Right ventricle myocardium superior (tissue), 1 donor: ENCODE measurements at regions of chr12 and their contacts with region 1.

Region 1: GRCh38 chr12:5988659-5989116 is 43.6 kb upstream of the ANO2 start:
- DNase-seq: peak; percentile 90
- ATAC-seq: peak; percentile 95

Region 2: GRCh38 chr12:6039894-6040568 is 51.3 kb after region 1 on chr12:
- intact Hi-C with region 1: loop called (anchors 2 kb)
- DNase-seq: no peak
- ATAC-seq: peak; percentile 84

Region 3: DNA sequence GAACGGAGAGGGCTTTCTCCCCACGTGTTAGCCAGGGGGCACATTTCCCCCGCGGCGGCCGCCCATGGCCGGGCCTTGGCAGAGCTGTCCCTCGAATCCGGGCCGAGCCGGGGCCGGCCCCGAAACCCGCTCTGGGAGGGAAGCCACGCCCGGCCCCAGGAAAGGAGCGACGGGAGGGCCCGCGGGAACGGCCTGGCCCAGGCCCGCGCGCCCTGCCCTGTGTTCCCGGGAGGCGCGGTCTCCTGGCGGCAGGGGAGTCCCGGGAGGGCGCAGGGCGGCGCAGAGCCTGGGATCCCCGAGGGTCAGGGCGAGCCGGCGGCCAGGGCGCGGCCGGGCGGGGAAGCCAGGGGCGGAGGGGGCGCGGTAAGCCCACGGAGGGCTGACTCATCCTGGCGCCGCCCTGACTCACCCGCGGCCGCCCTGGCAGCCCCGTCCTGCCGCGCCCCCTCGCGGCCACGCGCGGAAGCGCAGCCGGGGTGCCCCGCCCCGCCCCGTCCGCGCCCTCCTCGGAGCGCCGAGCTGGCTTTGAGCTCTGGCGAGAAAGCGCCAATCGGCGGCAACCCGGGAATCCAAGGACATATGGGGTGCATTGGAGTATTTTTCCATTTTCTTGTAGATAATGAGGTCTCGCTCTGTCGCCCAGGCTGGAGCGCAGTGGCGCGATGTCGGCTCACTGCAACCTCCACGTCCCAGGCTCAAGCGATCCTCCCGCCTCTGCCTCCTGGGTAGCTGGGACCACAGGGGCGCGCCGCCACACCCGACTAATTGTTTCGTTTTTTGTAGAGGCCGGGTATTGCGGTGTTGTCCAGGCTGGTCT is 290.0 kb after region 1 on chr12:
- intact Hi-C with region 1: loop called (anchors 5 kb)
- DNase-seq: peak; percentile 90
- ATAC-seq: peak; percentile 96

Region 4: DNA sequence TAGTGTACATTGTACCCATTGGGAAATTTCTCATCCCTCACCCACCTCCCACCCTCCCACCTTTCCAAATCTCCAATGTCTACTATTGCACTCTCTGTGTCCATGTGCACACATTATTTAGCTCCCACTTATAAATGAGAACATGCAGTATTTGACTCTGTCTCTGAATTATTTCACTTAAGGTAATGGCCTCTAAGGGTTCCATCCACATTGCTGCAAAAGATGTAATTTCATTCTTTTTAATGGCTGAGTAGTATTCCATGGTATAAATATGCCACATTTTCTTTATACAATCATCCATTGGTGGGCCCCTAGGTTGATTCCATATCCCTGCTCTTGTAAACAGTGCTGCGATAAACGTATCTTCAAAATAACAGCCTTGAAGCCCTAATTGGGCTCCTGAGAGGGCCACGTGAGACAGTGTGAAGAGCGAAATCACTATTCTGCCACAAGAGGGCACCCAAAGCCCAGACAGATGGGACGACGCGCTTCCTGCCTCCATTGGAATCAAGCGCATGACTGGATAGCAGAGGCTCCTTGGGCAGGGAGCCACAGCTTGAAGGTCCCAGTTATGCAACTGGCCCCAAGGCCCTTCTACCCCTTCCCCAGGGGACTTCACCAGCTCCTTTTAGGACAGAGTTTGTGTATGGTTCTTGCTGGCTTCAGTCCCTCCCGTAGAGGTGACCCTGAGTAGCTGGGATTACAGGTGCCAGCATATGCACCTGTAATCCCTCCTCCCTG is 434.7 kb after region 1 on chr12:
- intact Hi-C with region 1: no loop called
- DNase-seq: peak; percentile 89
- ATAC-seq: peak; percentile 100